ENCODE measurements at regions of chr3 and their contacts with region 1.

Region 1: GRCh38 chr3:38346587-38347410 is at the start of gene XYLB:
- DNase-seq: peak; percentile 90
- H3K4me3 ChIP-seq: peak within 1 kb of the TSS; percentile 41 to 87 (median 70)
- H3K27ac ChIP-seq: peak within 1 kb of the TSS; percentile 76 to 84 (median 78)
- H3K4me1 ChIP-seq: peaks cover 0 to 16% (median 11%) of the 10 kb centered on the region in 4 donors
- H3K27me3 ChIP-seq: no peaks in the 10 kb centered on the region
- CTCF ChIP-seq: peak; percentile 83 to 96 (median 86)
- EP300 ChIP-seq: no peak
- POLR2A ChIP-seq: peak; percentile 59
- total RNA-seq, gene XYLB: 13.5 to 18.7 (median 15.1) TPM

Region 2: DNA sequence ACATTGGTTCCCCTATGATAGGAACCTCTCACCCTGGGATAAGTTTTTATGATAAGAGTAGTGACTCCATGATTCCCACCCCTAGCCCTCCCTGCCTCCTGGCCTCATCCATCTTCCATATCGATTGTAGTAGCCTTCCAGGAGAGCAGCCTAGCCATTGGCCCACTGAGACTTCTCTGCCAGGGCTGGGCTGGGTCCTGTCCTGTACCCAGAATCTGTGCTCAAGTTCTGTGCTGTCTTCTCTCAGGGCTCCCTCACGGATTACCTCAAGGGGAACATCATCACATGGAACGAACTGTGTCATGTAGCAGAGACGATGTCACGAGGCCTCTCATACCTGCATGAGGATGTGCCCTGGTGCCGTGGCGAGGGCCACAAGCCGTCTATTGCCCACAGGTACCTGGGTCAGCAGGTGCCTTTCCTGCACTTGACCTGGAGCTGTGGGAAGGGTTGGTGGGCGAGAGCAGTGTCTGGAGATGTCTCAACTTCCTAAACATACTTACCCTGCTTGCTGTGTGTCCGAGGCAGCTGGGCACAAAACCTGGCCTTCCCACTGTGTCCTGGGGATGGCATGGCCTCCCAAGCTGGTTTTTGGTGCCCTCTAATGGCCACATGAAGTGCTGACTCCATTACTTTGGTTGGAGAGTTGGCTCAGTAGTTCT is 132.8 kb after region 1 on chr3:
- in situ Hi-C with region 1: loop called (anchors 5 to 10 kb)
- intact Hi-C with region 1: loop called (anchors 5 kb)
- DNase-seq: peak; percentile 68
- H3K4me3 ChIP-seq: no peak overlapping the region
- H3K27ac ChIP-seq: no peak overlapping the region
- H3K4me1 ChIP-seq: no peaks in the 10 kb centered on the region
- H3K27me3 ChIP-seq: no peaks in the 10 kb centered on the region
- CTCF ChIP-seq: peak; percentile 77 to 86 (median 81)
- EP300 ChIP-seq: no peak
- POLR2A ChIP-seq: no peak

Measured in transverse colon (tissue), 4 donors.